ENCODE measurements at regions of chr1 and their contacts with region 1.

Region 1: DNA sequence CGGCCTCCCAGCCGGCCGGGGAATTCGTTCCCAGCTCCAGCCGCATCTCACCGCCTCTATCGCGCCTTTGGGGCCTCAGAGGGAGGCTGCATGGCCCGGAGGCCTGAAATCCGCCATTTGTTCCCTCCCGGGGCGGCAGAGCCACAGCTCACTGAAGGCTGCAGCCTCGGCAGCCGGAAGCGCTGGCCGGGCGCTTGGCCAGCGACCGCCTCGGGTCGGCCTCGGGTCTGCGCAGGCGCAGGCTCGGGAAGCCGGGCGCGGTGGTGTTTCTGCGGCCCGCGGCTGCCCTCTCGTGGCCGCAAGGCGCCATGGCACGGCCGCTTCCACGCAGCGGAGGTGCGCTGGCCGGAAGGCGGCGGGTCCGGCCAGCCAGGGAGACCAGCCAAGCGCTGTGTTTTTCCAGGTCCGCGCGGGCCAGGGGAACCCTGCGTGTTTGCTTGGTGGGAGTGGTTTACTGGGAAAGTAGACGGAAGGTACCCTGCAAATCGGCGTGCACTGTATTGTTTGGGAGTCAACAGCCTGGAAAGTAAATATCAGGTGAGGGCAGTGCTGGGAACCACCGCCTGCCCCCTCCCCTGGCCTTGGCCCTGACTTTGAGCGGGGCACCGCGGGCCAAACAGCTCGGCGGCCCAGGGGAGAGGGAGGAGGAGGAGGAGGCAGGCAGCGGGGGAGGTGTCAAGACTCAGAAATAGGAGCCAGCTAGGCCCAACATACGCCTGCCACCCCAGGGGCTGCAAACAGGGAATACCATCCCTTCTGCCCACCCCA is 52.7 kb upstream of the CD34 start:
- DNase-seq: peak; percentile 61 to 94 (median 80)
- ATAC-seq: peak; percentile 95
- H3K4me3 ChIP-seq: peak overlapping the region; percentile 87
- H3K4me3 Mint-ChIP-seq: peak overlapping the region; percentile 78 to 92 (median 84)
- H3K27ac ChIP-seq: peak overlapping the region; percentile 63
- H3K27ac Mint-ChIP-seq: peak overlapping the region in 8 of 9 donors; percentile 12 to 83 (median 68)
- H3K4me1 ChIP-seq: peaks cover 3 to 5% of the 10 kb centered on the region in 2 donors
- H3K4me1 Mint-ChIP-seq: peaks cover 6 to 15% (median 9%) of the 10 kb centered on the region in 7 donors
- H3K27me3 ChIP-seq: peaks cover 0 to 7% of the 10 kb centered on the region in 2 donors
- H3K27me3 Mint-ChIP-seq: peaks cover 10 to 50% (median 22%) of the 10 kb centered on the region in 5 donors

Region 2: GRCh38 chr1:207644166-207644851 is 319.3 kb before region 1 on chr1:
- CTCF ChIA-PET with region 1: no interaction called
- POLR2A ChIA-PET with region 1: no interaction called
- intact Hi-C with region 1: no loop called
- DNase-seq: no peak
- ATAC-seq: no peak
- H3K4me3 ChIP-seq: peak overlapping the region; percentile 66
- H3K4me3 Mint-ChIP-seq: peak overlapping the region; percentile 68 to 88 (median 82)
- H3K27ac ChIP-seq: no peak overlapping the region
- H3K27ac Mint-ChIP-seq: peak overlapping the region in 1 of 9 donors; percentile 43
- H3K4me1 ChIP-seq: peaks cover 0 to 9% of the 10 kb centered on the region in 2 donors
- H3K4me1 Mint-ChIP-seq: peaks cover 0 to 13% (median 7%) of the 10 kb centered on the region in 7 donors
- H3K27me3 ChIP-seq: peaks cover 6 to 7% of the 10 kb centered on the region in 2 donors
- H3K27me3 Mint-ChIP-seq: peaks cover 18 to 67% (median 30%) of the 10 kb centered on the region in 5 donors

Region 3: GRCh38 chr1:207654320-207654719 is 309.3 kb before region 1 on chr1:
- CTCF ChIA-PET with region 1: no interaction called
- POLR2A ChIA-PET with region 1: no interaction called
- intact Hi-C with region 1: loop called in 1 of 2 experiments (anchors 1 kb)
- DNase-seq: no peak
- ATAC-seq: no peak
- H3K4me3 ChIP-seq: no peak overlapping the region
- H3K4me3 Mint-ChIP-seq: no peak overlapping the region
- H3K27ac ChIP-seq: no peak overlapping the region
- H3K27ac Mint-ChIP-seq: no peak overlapping the region
- H3K4me1 ChIP-seq: no peaks in the 10 kb centered on the region
- H3K4me1 Mint-ChIP-seq: no peaks in the 10 kb centered on the region
- H3K27me3 ChIP-seq: no peaks in the 10 kb centered on the region
- H3K27me3 Mint-ChIP-seq: peaks cover 0 to 32% (median 9%) of the 10 kb centered on the region in 5 donors

Region 4: GRCh38 chr1:207711285-207711684 is 252.3 kb before region 1 on chr1:
- CTCF ChIA-PET with region 1: no interaction called
- POLR2A ChIA-PET with region 1: interaction called, 3 read pairs
- intact Hi-C with region 1: loop called (anchors 2 to 10 kb)
- DNase-seq: no peak
- ATAC-seq: no peak
- H3K4me3 ChIP-seq: no peak overlapping the region
- H3K4me3 Mint-ChIP-seq: no peak overlapping the region
- H3K27ac ChIP-seq: no peak overlapping the region
- H3K27ac Mint-ChIP-seq: peak overlapping the region in 2 of 9 donors; percentile 68 to 71
- H3K4me1 ChIP-seq: no peaks in the 10 kb centered on the region
- H3K4me1 Mint-ChIP-seq: peaks cover 0 to 2% (median 0%) of the 10 kb centered on the region in 7 donors
- H3K27me3 ChIP-seq: no peaks in the 10 kb centered on the region
- H3K27me3 Mint-ChIP-seq: peaks cover 0 to 20% (median 0%) of the 10 kb centered on the region in 5 donors

Region 5: GRCh38 chr1:207751790-207752455 is 211.7 kb before region 1 on chr1 and contains the start of gene CD46:
- CTCF ChIA-PET with region 1: no interaction called
- POLR2A ChIA-PET with region 1: no interaction called
- intact Hi-C with region 1: loop called (anchors 1 kb)
- DNase-seq: peak; percentile 88 to 95 (median 90)
- ATAC-seq: peak; percentile 99
- H3K4me3 ChIP-seq: peak within 1 kb of the TSS; percentile 92
- H3K4me3 Mint-ChIP-seq: peak within 1 kb of the TSS; percentile 94 to 100 (median 99)
- H3K27ac ChIP-seq: peak within 1 kb of the TSS; percentile 90
- H3K27ac Mint-ChIP-seq: peak within 1 kb of the TSS; percentile 96 to 99 (median 97)
- H3K4me1 ChIP-seq: peaks cover 27 to 50% of the 10 kb centered on the region in 2 donors
- H3K4me1 Mint-ChIP-seq: peaks cover 49 to 93% (median 86%) of the 10 kb centered on the region in 7 donors
- H3K27me3 ChIP-seq: no peaks in the 10 kb centered on the region
- H3K27me3 Mint-ChIP-seq: peaks cover 0 to under 1% (median 0%) of the 10 kb centered on the region in 5 donors
- total RNA-seq, gene CD46: 121 to 216 (median 127) TPM

Region 6: GRCh38 chr1:207868774-207869721 is 94.6 kb before region 1 on chr1:
- CTCF ChIA-PET with region 1: interaction called, 19 read pairs
- POLR2A ChIA-PET with region 1: interaction called, 10 read pairs
- intact Hi-C with region 1: loop called in 1 of 2 experiments (anchors 1 kb)
- DNase-seq: peak; percentile 57 to 86 (median 79)
- ATAC-seq: peak; percentile 79
- H3K4me3 ChIP-seq: peak overlapping the region; percentile 86
- H3K4me3 Mint-ChIP-seq: peak overlapping the region; percentile 74 to 99 (median 94)
- H3K27ac ChIP-seq: peak overlapping the region; percentile 78
- H3K27ac Mint-ChIP-seq: peak overlapping the region; percentile 91 to 98 (median 93)
- H3K4me1 ChIP-seq: peaks cover 39 to 80% of the 10 kb centered on the region in 2 donors
- H3K4me1 Mint-ChIP-seq: peaks cover 52 to 85% (median 77%) of the 10 kb centered on the region in 7 donors
- H3K27me3 ChIP-seq: no peaks in the 10 kb centered on the region
- H3K27me3 Mint-ChIP-seq: no peaks in the 10 kb centered on the region

Region 7: GRCh38 chr1:207876131-207876530 is 87.5 kb before region 1 on chr1:
- CTCF ChIA-PET with region 1: interaction called, 11 read pairs
- POLR2A ChIA-PET with region 1: interaction called, 3 read pairs
- intact Hi-C with region 1: no loop called
- DNase-seq: no peak
- ATAC-seq: no peak
- H3K4me3 ChIP-seq: no peak overlapping the region
- H3K4me3 Mint-ChIP-seq: peak overlapping the region in 2 of 10 donors; percentile 16 to 39
- H3K27ac ChIP-seq: no peak overlapping the region
- H3K27ac Mint-ChIP-seq: peak overlapping the region in 7 of 9 donors; percentile 29 to 93 (median 69)
- H3K4me1 ChIP-seq: peaks cover 20 to 38% of the 10 kb centered on the region in 2 donors
- H3K4me1 Mint-ChIP-seq: peaks cover 48 to 62% (median 57%) of the 10 kb centered on the region in 7 donors
- H3K27me3 ChIP-seq: no peaks in the 10 kb centered on the region
- H3K27me3 Mint-ChIP-seq: no peaks in the 10 kb centered on the region

Region 8: DNA sequence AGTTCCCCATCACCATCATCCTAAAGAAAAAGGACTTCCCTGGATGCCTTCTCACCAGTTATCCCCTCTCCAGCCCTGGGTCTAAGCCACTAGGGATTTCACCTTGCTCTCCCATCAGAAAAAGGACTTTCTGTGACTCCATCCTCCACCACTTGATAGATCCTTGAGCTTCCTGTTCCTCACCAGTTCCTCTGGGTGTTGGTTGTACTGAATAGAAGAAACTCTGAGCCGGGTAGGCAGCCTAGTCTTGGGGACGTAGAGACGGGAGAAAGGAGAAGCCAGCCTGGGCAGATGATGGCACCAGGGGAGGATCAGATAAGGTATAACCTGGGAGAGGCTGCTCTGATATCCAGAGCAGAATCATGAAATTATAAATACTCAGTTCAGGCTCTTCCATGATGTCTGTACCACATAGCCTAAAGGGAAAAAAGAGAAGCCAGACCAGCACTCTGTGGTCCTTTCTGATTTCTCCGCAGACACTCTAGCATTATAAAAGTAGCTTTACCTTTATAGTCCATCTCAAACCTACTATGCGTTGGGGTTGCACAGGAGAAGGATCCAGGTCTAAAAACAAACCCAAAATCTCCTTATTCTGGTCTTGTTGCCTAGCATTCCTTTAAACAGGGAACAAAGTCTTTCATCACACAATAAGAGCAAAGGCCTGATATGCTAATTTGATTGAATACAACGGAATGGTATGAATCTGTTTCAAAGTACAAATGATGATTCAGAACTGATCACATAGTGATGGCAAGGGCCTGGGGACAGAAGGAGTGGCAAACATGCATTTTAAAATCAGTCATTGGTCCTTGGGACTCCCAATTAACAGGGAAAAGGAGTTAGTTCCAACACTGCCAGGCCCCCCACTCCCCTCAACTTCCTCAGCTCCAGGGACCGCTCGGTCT is 51.5 kb before region 1 on chr1:
- CTCF ChIA-PET with region 1: no interaction called
- POLR2A ChIA-PET with region 1: no interaction called
- intact Hi-C with region 1: no loop called
- DNase-seq: no peak
- ATAC-seq: no peak
- H3K4me3 ChIP-seq: no peak overlapping the region
- H3K4me3 Mint-ChIP-seq: peak overlapping the region; percentile 15 to 71 (median 54)
- H3K27ac ChIP-seq: no peak overlapping the region
- H3K27ac Mint-ChIP-seq: no peak overlapping the region
- H3K4me1 ChIP-seq: peaks cover 0 to 4% of the 10 kb centered on the region in 2 donors
- H3K4me1 Mint-ChIP-seq: peaks cover 8 to 23% (median 19%) of the 10 kb centered on the region in 7 donors
- H3K27me3 ChIP-seq: no peaks in the 10 kb centered on the region
- H3K27me3 Mint-ChIP-seq: peaks cover 56 to 78% (median 67%) of the 10 kb centered on the region in 5 donors